ENCODE measurements at regions of chr21 and their contacts with region 1.

Region 1: GRCh38 chr21:43810505-43811261 is 21.3 kb downstream of the RRP1 start:
- DNase-seq: peak; percentile 66 to 78
- ATAC-seq: peak; percentile 66 to 84
- H3K4me3 ChIP-seq: no peak overlapping the region
- H3K27ac ChIP-seq: peak overlapping the region in 1 of 2 experiments; percentile 47; a peak in 2 of 6 replicates
- H3K4me1 ChIP-seq: peaks cover 9% of the 10 kb centered on the region; the same call in 1 of the 3 replicates
- CTCF ChIP-seq: peak; percentile 65
- EP300 ChIP-seq: no peak
- POLR2A ChIP-seq: no peak
- RAD21 ChIP-seq: peak; percentile 88 to 91

Region 2: DNA sequence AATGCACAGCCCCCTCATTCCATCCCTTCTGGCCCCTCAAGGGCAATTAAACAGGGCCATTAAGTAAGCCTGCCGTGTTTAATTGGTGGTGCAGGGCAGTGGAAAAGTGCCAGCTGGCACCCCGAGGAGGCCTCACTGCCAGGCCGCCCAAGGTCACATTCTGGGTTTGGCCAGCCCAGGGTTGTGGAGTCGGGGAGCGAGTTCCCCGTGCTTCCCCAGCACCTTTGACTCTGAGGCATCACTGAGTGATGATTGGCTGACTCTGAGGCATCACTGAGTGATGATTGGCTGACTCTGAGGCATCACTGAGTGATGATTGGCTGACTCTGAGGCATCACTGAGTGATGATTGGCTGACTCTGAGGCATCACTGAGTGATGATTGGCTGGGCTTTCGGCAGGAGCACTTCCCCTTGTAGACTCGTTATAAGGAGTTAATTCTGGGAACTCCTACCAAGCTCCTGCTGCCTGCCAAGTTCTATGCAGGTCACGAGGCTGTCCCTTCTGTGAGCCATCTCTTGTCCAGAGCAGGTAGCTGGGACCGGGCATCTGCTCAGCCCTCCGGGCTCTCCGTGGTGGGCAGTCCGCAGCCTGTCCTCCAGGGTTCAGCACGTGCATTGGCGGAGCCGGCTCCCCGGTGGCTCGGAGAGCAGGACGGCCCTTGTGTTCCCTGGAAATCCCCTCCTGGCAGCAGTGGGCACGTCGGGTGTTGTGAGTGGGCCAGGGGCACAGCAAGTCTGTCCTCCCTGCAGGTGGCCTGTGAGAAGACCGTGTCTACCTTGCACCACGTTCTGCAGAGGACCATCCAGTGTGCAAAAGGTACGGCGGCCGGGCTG is 55.5 kb before region 1 on chr21:
- CTCF ChIA-PET with region 1: no interaction called
- POLR2A ChIA-PET with region 1: no interaction called
- DNase-seq: no peak
- ATAC-seq: peak; percentile 48 to 53; a peak in 5 of 6 replicates
- H3K4me3 ChIP-seq: no peak overlapping the region
- H3K27ac ChIP-seq: no peak overlapping the region
- H3K4me1 ChIP-seq: peaks cover 7% of the 10 kb centered on the region; the same call in 1 of the 3 replicates
- CTCF ChIP-seq: no peak
- EP300 ChIP-seq: no peak
- POLR2A ChIP-seq: no peak
- RAD21 ChIP-seq: no peak

Region 3: GRCh38 chr21:43789276-43790009 is 21.2 kb before region 1 on chr21 and contains the start of gene RRP1:
- CTCF ChIA-PET with region 1: interaction called, 12 read pairs
- POLR2A ChIA-PET with region 1: no interaction called
- DNase-seq: peak; percentile 73 to 82
- ATAC-seq: peak; percentile 89 to 92
- H3K4me3 ChIP-seq: peak within 1 kb of the TSS; percentile 91
- H3K27ac ChIP-seq: peak within 1 kb of the TSS; percentile 76 to 99
- H3K4me1 ChIP-seq: peaks cover 8% of the 10 kb centered on the region; the same call in 1 of the 3 replicates
- CTCF ChIP-seq: peak; percentile 74
- EP300 ChIP-seq: no peak
- POLR2A ChIP-seq: peak; percentile 68; the same call in 1 of the 2 replicates
- RAD21 ChIP-seq: peak; percentile 13 to 47; a peak in 4 of 5 replicates
- polyA plus RNA-seq, gene RRP1: 15.4 and 16.8 TPM in 2 replicates

Region 4: GRCh38 chr21:43938751-43939442 is 128.2 kb after region 1 on chr21:
- CTCF ChIA-PET with region 1: interaction called, 24 read pairs
- POLR2A ChIA-PET with region 1: no interaction called
- DNase-seq: peak; percentile 68 to 80
- ATAC-seq: peak; percentile 95 to 98
- H3K4me3 ChIP-seq: peak overlapping the region; percentile 33
- H3K27ac ChIP-seq: peak overlapping the region; percentile 43 to 81; a peak in 5 of 6 replicates
- H3K4me1 ChIP-seq: 0 out of 3 replicates have a peak, but pooled peaks cover 3% of the 10 kb centered on the region
- CTCF ChIP-seq: peak; percentile 93
- EP300 ChIP-seq: no peak
- POLR2A ChIP-seq: no peak
- RAD21 ChIP-seq: peak; percentile 67 to 68

Measured in A549 (cell line).